Activated T-helper 2 cell treated with anti-CD3 and anti-CD28 coated beads, Interferon-gamma antibody, Interleukin-2, Interleukin-4, amounts not matched to agents 10 μg/mL and 5 μg/mL and 100 μg/mL, durations not matched to agents 14 hours and 24 hours and 36 hours (primary cell): ENCODE measurements at regions of chr7 and their contacts with region 1.

Region 1: DNA sequence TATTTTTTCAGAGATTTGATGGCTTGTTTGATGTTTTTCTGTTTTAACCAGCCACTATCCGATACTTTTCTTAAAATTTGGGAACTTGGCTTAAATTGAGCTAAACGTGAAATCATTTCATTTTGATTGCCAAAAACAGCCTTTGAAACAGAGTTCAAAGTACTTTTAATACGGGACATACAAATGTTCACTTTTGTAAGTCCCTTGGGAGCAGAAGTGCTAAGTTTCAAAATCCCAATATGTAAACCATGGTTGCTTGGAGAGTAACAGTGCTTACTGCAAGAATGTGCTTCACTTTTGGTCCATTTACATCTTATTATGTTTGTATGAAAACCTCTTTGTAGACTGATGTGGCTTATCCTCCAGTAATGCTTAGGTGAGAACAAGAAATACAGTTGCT is 10.9 kb downstream of the PNPLA8 start:
- DNase-seq: no peak
- H3K4me3 Mint-ChIP-seq: no peak overlapping the region
- H3K27ac Mint-ChIP-seq: no peak overlapping the region
- H3K4me1 Mint-ChIP-seq: peaks cover 6% of the 10 kb centered on the region
- H3K27me3 Mint-ChIP-seq: no peaks in the 10 kb centered on the region

Region 2: DNA sequence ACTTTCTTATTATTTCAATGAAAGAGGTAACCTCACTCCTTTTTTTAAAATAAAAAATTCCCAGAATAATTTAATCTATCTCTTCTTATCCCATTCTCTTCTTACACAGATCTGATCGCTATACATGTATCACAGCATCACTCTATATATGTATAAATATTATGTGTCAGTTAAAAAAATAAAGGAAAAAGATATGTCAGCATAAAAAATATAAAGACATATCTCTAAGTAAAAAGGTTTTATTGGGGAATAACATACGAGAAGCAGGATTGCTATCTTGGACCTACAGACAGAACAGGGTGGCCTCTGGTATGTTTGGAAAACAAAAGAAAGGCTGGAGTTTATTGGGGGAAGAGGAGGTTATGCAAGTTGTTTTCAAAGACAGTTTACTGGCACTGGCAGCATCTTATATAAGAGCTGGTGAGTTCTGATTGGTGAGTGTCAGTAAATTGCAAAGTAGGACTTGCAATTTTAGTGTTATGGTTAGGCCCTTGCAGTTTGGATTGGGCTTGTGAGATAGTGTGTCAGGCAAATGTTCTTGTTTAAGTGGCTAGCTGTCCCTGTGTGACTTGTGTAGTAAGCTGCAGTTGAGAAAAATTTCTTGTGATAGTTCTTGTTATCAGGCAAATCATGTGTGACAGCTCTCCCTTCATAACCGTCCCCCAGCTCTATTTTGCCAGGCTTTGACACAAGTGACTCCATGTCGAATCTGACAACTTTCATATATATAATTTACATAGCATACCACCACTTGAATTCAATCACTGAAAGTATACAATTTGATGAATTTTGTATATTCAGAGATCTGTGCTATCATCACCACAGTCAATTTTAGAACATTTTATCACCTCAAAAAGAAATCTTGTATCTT is 1228.0 kb before region 1 on chr7:
- intact Hi-C with region 1: loop called (anchors 10 kb)
- DNase-seq: no peak
- H3K4me3 Mint-ChIP-seq: no peak overlapping the region
- H3K27ac Mint-ChIP-seq: no peak overlapping the region
- H3K4me1 Mint-ChIP-seq: peaks cover 2% of the 10 kb centered on the region
- H3K27me3 Mint-ChIP-seq: no peaks in the 10 kb centered on the region

Region 3: GRCh38 chr7:108045154-108045553 is 469.9 kb before region 1 on chr7:
- intact Hi-C with region 1: no loop called
- DNase-seq: no peak
- H3K4me3 Mint-ChIP-seq: no peak overlapping the region
- H3K27ac Mint-ChIP-seq: no peak overlapping the region
- H3K4me1 Mint-ChIP-seq: no peaks in the 10 kb centered on the region
- H3K27me3 Mint-ChIP-seq: peaks cover 21% of the 10 kb centered on the region